GM10248 (cell line): ENCODE measurements at regions of chr21 and their contacts with region 1.

Region 1: GRCh38 chr21:46253610-46254124 is 25.1 kb upstream of the LSS start:
- DNase-seq: peak; percentile 47
- CTCF ChIP-seq: no peak

Region 2: GRCh38 chr21:46228345-46229051 is 25.2 kb before region 1 on chr21 and contains the start of gene LSS:
- CTCF ChIA-PET with region 1: interaction called, 21 read pairs
- POLR2A ChIA-PET with region 1: interaction called, 4 read pairs
- DNase-seq: peak; percentile 98
- CTCF ChIP-seq: no peak

Region 3: DNA sequence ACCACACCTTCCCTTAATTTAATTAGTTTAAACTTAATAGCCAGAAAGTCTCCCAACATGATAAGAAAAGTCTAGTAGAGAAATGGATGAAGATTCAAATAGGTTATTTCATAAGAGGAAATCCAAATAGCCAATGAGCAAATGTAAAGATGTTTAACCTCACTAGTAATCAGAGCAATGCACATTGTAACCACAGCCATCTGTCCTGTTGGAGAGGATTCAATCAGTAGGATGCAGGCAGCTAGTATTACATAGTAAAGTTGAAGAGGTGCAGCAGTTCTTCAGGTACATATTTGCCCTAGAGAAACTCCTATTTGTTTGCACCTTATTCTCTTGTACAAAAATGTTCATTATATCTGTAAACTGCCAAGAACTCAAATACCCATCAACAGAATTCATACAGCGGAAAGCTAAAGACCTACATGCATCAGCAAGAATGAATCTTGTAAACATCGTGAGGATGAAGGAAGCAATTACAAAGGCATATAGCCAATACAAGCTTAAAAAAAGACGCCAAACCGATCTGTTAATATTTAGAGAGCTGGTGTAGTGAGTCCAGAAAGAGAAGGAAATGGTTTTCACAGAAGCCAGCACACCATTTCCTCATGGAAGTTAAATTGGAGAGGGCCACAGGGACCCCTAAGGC is 232.9 kb after region 1 on chr21:
- CTCF ChIA-PET with region 1: no interaction called
- POLR2A ChIA-PET with region 1: no interaction called
- DNase-seq: no peak
- CTCF ChIP-seq: no peak

Region 4: GRCh38 chr21:46532080-46532479 is 278.4 kb after region 1 on chr21:
- CTCF ChIA-PET with region 1: no interaction called
- POLR2A ChIA-PET with region 1: no interaction called
- DNase-seq: no peak
- CTCF ChIP-seq: no peak